ENCODE measurements at regions of chr10 and their contacts with region 1.

Region 1: GRCh38 chr10:29998142-29998808 is 61.1 kb downstream of the JCAD start:
- DNase-seq: peak; percentile 49 to 86
- H3K4me3 ChIP-seq: no peak overlapping the region
- H3K27ac ChIP-seq: no peak overlapping the region
- H3K4me1 ChIP-seq: no peaks in the 10 kb centered on the region
- H3K27me3 ChIP-seq: no peaks in the 10 kb centered on the region
- CTCF ChIP-seq: peak; percentile 91 to 99 (median 99)
- EP300 ChIP-seq: no peak
- POLR2A ChIP-seq: no peak
- RAD21 ChIP-seq: peak; percentile 98 to 99

Region 2: DNA sequence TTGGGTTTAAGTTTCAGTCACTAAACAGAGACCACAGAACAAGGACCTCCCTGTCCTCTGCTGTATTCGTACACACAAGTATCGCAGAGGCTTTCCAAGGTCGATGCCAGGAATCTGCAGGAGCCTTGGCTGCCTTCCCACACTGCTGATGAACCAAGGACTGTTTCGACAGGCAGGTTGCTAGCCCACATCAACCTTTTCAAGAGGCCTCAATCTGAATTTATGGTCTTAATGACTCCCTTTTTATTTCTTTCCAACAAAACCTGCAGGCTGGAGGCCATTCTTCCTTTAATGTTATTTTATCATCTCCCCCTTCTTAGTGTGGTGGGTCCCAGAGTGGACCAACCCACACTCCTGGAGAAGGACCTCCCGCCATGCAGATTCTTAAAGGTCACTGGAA is 15.5 kb after region 1 on chr10:
- CTCF ChIA-PET with region 1: interaction called, 65 read pairs
- POLR2A ChIA-PET with region 1: no interaction called
- DNase-seq: no peak
- H3K4me3 ChIP-seq: no peak overlapping the region
- H3K27ac ChIP-seq: no peak overlapping the region
- H3K4me1 ChIP-seq: no peaks in the 10 kb centered on the region; a peak in 1 of 7 replicates
- H3K27me3 ChIP-seq: no peaks in the 10 kb centered on the region
- CTCF ChIP-seq: no peak
- EP300 ChIP-seq: no peak
- POLR2A ChIP-seq: no peak
- RAD21 ChIP-seq: no peak

Region 3: GRCh38 chr10:30027057-30028005 is 29.1 kb after region 1 on chr10:
- CTCF ChIA-PET with region 1: interaction called, 38 read pairs
- POLR2A ChIA-PET with region 1: no interaction called
- DNase-seq: peak; percentile 21 to 68
- H3K4me3 ChIP-seq: no peak overlapping the region
- H3K27ac ChIP-seq: no peak overlapping the region
- H3K4me1 ChIP-seq: peaks cover 0 to 5% (median 2%) of the 10 kb centered on the region in 4 experiments; a peak in 3 of 7 replicates
- H3K27me3 ChIP-seq: no peaks in the 10 kb centered on the region; a peak in 2 of 7 replicates
- CTCF ChIP-seq: peak; percentile 55 to 65 (median 65)
- EP300 ChIP-seq: no peak
- POLR2A ChIP-seq: no peak
- RAD21 ChIP-seq: peak; percentile 45 to 59

Region 4: GRCh38 chr10:30075481-30075880 is 77.2 kb after region 1 on chr10:
- CTCF ChIA-PET with region 1: interaction called, 10 read pairs
- POLR2A ChIA-PET with region 1: no interaction called
- DNase-seq: no peak
- H3K4me3 ChIP-seq: no peak overlapping the region
- H3K27ac ChIP-seq: no peak overlapping the region
- H3K4me1 ChIP-seq: peaks cover 0 to 4% (median 0%) of the 10 kb centered on the region in 4 experiments; a peak in 1 of 7 replicates
- H3K27me3 ChIP-seq: no peaks in the 10 kb centered on the region
- CTCF ChIP-seq: no peak
- EP300 ChIP-seq: no peak
- POLR2A ChIP-seq: no peak
- RAD21 ChIP-seq: no peak

Region 5: GRCh38 chr10:30241422-30242110 is 243.3 kb after region 1 on chr10:
- CTCF ChIA-PET with region 1: interaction called, 18 read pairs
- POLR2A ChIA-PET with region 1: no interaction called
- DNase-seq: no peak
- H3K4me3 ChIP-seq: no peak overlapping the region
- H3K27ac ChIP-seq: no peak overlapping the region
- H3K4me1 ChIP-seq: no peaks in the 10 kb centered on the region
- H3K27me3 ChIP-seq: no peaks in the 10 kb centered on the region
- CTCF ChIP-seq: no peak
- EP300 ChIP-seq: no peak
- POLR2A ChIP-seq: no peak
- RAD21 ChIP-seq: no peak